ENCODE measurements at regions of chr9 and their contacts with region 1.

Region 1: DNA sequence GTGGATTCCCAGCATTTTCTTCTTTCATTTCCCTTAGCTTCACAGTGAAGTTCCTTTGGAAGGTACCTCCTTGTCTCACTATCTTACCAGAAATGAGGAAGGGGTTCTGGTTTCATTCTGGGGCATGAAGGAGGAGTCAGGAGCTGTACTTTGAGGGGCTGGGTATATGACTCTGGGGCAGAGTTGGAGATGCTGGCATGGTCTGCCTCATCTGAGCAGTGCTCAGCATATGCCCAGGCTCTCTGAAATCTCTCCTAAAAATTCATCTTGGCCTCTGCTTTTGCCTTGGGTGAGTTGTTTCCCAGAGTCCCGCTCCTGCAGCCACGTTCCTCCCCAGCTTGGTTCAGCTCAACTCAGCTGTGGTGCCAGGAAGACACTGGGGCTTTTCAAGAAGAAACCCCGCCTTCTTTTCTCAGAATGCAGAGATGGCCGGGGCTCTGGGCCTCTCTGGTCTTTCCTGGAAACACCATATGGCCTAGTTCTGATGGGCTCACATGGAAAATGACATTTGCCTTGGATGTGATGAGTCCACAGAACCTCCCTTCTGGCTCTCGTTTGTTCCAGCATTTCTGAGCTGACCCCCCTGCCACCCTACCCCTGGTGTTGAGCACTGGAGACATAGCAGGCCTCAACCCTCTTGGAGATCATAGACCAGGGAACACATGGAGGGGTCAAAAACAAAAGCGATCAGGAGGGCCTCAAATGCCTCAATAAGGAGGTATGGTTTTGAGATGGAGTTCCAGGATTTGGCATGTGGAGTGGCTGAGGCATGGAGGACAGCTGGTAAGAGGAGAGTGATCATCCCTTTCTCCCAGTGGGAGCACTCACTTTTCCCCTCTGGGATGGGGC is 12.0 kb upstream of the TGFBR1 start:
- DNase-seq: peak; percentile 88
- H3K4me3 Mint-ChIP-seq: peak overlapping the region; percentile 74
- H3K27ac Mint-ChIP-seq: peak overlapping the region; percentile 95
- H3K4me1 Mint-ChIP-seq: peaks cover 65% of the 10 kb centered on the region
- H3K27me3 Mint-ChIP-seq: no peaks in the 10 kb centered on the region

Region 2: DNA sequence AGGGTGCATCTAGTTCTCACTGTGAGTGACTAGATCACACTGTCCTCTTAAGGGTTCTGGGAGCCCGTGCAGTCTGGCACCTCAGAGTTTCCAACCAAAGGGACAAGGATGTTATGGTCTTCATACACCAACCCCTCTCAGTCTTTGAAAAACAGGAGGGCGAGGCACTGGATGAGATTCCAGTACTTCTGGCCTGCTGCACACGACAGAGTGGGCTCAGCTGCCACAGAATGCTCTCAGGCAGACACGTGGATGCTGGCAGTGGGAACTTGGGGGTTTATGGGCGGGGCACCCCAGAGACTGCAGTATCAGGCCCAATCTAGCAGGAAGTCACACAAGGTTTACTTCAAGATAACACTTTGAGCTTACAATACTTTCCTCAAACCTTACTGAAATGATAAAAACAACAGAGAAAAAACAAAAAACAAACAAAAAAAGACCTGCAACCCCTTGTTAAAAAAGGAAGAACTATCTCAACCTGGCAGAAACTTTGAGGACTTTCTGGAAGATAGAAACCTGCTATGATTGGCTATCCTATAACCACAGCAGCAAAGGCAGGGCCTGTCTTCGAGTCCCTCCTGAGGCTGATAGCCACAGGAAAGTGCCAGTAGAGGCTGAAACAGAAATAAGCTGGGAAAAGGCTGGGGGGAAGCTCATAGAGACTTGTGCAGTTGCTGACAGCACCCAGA is 16.2 kb before region 1 on chr9:
- intact Hi-C with region 1: loop called (anchors 2 kb)
- DNase-seq: peak; percentile 84
- H3K4me3 Mint-ChIP-seq: peak overlapping the region; percentile 70
- H3K27ac Mint-ChIP-seq: peak overlapping the region; percentile 90
- H3K4me1 Mint-ChIP-seq: peaks cover 41% of the 10 kb centered on the region
- H3K27me3 Mint-ChIP-seq: no peaks in the 10 kb centered on the region

Measured in activated CD4-positive, alpha-beta T cell treated with anti-CD3 and anti-CD28 coated beads, Interleukin-2, amount 10 ng/mL, durations not matched to agents 24 days and 14 days (primary cell).